Activated T-helper 2 cell treated with anti-CD3 and anti-CD28 coated beads, Interferon-gamma antibody, Interleukin-2, Interleukin-4, amounts not matched to agents 10 μg/mL and 5 μg/mL and 100 μg/mL, durations not matched to agents 14 hours and 24 hours and 36 hours (primary cell): ENCODE measurements at regions of chr13 and their contacts with region 1.

Region 1: DNA sequence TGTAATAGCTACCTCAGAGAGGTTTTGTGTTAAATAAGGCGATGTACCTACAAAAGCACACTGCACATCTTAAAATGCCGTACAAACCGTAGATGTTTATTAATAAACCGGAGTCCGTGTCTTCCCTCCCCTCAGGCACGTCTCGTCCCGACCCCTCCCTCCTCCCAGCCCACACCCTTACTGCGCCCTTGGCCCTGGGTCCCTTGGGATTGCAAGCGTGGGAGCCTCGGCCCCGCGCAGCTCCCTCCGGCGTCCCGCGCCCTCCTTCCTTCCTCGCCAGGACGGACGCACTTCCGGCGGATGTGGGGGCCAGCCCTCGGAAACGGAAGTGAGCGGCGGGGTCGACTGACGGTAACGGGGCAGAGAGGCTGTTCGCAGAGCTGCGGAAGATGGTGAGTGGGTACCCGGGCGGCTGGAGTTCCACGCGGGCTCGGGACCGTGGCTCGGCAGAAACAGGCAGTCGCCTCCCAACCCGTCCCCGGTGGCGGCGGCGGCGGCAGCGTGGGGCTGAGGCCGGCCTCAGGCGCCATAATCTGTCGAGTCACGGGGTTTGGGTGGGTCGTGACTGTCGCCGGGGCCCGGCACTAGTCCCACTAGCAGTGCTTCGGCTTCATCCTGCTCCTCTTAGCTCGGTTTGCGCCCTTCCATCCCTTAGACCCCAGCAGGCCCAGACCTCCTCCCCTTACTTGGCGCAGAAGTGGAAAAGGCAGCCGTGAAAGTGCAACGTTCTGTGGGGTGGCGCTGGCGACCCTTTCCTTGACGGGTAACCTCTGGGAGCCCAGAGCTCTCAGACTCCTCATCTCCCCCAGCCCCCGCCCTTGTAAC is at the start of gene POMP:
- DNase-seq: peak; percentile 87
- H3K4me3 Mint-ChIP-seq: peak within 1 kb of the TSS; percentile 96
- H3K27ac Mint-ChIP-seq: peak within 1 kb of the TSS; percentile 95
- H3K4me1 Mint-ChIP-seq: peaks cover 49% of the 10 kb centered on the region
- H3K27me3 Mint-ChIP-seq: no peaks in the 10 kb centered on the region
- total RNA-seq, gene POMP: 145 and 149 TPM in 2 replicates

Region 2: GRCh38 chr13:28138012-28138755 is 520.8 kb before region 1 on chr13 and contains the start of gene PAN3:
- intact Hi-C with region 1: loop called (anchors 2 kb)
- DNase-seq: peak; percentile 90
- H3K4me3 Mint-ChIP-seq: peak within 1 kb of the TSS; percentile 97
- H3K27ac Mint-ChIP-seq: peak within 1 kb of the TSS; percentile 98
- H3K4me1 Mint-ChIP-seq: peaks cover 38% of the 10 kb centered on the region
- H3K27me3 Mint-ChIP-seq: no peaks in the 10 kb centered on the region
- total RNA-seq, gene PAN3: 35.4 and 35.6 TPM in 2 replicates

Region 3: DNA sequence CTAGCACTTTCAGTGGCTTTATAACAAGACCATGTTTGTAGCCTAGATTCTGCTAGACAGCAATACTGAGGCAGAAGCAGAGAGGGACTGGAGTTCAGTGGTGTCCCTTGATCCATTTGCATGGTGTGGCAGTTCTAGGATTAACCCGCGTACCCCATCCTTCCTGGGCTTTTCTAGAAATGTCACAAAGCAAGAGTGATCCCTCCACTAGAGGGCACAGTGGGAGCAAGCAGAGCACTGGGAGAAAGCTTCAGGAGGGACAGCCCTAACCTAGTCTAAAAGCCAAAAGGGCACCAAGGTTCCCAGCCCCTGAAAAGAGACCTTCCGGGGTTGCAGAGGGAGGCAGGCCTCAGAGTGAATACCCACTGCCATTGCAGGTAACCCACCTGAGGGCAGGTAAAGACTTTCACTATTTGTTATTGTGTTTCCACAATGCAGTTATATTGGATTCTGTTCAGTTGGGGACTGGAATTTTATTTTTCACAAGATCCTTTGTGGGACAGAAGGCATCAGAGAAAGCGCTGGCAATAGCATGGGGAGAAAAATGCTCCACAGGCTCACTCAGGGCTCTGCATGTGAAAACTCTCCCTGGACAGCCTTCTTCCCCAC is 334.7 kb before region 1 on chr13:
- intact Hi-C with region 1: loop called (anchors 1 kb)
- DNase-seq: peak; percentile 30
- H3K4me3 Mint-ChIP-seq: no peak overlapping the region
- H3K27ac Mint-ChIP-seq: no peak overlapping the region
- H3K4me1 Mint-ChIP-seq: peaks cover 2% of the 10 kb centered on the region
- H3K27me3 Mint-ChIP-seq: peaks cover 5% of the 10 kb centered on the region

Region 4: DNA sequence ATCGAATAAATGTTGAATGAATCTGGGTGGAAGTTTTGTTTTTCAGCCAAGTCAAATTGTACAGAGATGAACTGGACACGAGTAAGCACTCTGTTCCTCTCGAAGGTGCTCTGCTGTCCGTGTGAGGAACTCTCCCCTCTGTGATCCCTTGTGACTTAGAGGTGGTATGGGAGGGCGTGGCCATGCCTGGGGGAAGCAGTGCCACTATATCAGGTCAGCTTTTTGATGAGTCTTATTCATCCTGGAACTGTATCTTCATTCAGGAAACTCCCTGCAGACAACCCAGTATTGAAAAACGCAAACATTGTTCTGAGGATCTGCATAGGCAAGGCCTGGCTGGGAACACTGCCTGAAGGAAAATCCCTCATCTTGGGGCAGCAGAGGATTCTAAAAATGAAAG is 118.4 kb before region 1 on chr13:
- intact Hi-C with region 1: loop called (anchors 1 kb)
- DNase-seq: no peak
- H3K4me3 Mint-ChIP-seq: no peak overlapping the region
- H3K27ac Mint-ChIP-seq: peak overlapping the region; percentile 85
- H3K4me1 Mint-ChIP-seq: peaks cover 29% of the 10 kb centered on the region
- H3K27me3 Mint-ChIP-seq: no peaks in the 10 kb centered on the region

Region 5: DNA sequence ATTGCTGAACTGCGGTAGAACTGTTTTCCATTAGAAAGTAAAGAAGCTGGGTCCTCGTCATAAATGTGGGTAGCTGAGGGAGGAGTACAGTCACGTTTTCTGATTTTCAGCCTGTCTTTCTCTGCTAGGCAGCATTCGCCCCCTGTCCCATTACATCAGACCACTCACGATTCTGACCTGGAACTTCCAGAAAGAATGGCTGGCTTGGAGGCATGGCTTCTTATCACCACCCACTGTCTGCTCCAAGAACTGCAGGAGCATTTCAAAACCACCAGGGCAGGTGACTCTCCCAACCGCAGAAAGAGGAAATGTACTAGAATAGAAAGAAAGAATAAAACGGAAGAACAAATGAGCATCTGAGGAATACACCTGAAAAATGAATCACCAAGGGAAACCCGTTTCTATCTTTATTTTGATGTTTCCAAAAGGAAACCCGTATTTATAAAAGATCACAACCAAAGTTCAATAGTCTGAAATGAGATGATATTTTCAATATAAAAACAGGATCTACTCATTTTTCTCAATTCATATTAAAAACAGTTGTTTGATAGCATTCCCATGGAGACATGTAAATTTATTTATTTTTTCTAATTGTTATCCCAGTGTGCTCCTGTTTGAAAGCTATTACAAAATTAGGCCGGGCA is 22.2 kb before region 1 on chr13:
- intact Hi-C with region 1: loop called (anchors 1 kb)
- DNase-seq: peak; percentile 43
- H3K4me3 Mint-ChIP-seq: peak overlapping the region; percentile 42
- H3K27ac Mint-ChIP-seq: peak overlapping the region; percentile 29
- H3K4me1 Mint-ChIP-seq: peaks cover 16% of the 10 kb centered on the region
- H3K27me3 Mint-ChIP-seq: peaks cover 30% of the 10 kb centered on the region

Region 6: DNA sequence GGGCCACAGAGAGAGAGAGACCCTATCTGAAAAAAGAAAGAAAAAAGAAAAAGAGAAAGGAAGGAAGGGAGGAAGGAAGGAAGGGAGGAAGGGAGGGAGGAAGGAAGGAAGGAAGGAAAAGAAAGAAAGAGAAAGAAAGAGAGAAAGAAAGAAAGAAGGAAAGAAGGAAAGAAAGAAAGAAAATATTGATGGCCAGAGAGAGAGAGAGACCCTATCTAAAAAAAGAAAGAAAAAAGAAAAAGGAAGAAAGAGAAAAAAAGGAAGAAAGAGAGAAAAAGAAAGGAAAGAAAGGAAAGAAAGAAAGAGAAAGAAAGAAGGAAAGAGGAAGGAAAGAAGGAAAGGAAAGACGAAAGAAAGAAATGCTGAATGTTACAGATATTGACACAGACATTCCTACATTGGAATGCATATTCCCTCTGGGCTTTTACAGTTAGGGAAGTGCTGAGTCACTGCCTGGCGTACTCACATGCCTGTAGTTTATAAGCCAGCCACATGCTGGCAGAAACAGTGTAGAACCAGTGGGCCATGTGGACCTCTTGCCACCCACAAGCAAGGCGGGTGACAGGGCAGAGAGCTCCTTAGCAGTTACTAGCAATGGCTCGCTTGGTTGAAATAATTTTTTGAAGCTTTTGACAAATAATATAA is 94.4 kb after region 1 on chr13:
- intact Hi-C with region 1: no loop called
- DNase-seq: no peak
- H3K4me3 Mint-ChIP-seq: no peak overlapping the region
- H3K27ac Mint-ChIP-seq: no peak overlapping the region
- H3K4me1 Mint-ChIP-seq: peaks cover 22% of the 10 kb centered on the region
- H3K27me3 Mint-ChIP-seq: no peaks in the 10 kb centered on the region

Region 7: GRCh38 chr13:28792992-28793391 is 134.0 kb after region 1 on chr13:
- intact Hi-C with region 1: loop called (anchors 10 kb)
- DNase-seq: no peak
- H3K4me3 Mint-ChIP-seq: no peak overlapping the region
- H3K27ac Mint-ChIP-seq: no peak overlapping the region
- H3K4me1 Mint-ChIP-seq: peaks cover 3% of the 10 kb centered on the region
- H3K27me3 Mint-ChIP-seq: peaks cover 42% of the 10 kb centered on the region